ENCODE measurements at regions of chr17 and their contacts with region 1.

Region 1: DNA sequence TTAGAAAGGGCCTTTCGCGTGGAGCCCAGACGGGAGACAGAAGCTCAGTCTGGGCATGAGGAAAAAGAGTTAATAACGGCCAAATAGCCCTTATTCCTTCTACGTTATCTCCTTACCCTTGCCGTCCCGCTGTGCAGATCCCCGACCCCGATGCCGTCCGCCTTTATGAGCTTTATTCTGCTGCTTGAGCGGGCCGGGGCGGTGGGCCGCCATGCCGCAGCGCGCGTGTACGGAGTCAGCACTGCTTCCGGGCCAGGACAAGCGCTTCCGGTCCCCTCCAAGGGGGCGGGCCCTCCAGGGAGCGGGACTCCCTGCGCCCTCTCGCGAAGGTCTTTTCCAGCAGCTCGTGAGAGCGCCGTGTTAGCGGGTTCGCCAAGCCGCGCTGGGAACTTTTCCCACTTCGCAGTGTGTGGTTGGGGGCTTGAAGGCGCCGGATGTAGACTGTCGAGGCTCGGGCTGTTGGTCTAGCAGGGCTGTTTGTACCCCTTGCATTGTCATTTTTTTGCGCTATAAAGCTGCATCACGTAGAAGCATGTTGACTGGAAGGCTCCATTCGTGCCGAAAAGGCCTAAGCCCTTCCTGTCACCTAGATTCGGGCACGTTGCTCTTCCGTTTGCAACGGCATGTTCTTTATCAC is at the start of gene TSR1:
- DNase-seq: peak; percentile 84 to 93 (median 86)
- ATAC-seq: peak; percentile 78 to 83
- H3K4me3 Mint-ChIP-seq: peak within 1 kb of the TSS in 9 of 10 donors; percentile 97 to 100 (median 99)
- H3K27ac Mint-ChIP-seq: peak within 1 kb of the TSS; percentile 93 to 99 (median 97)
- H3K4me1 Mint-ChIP-seq: peaks cover 16 to 38% (median 22%) of the 10 kb centered on the region in 4 donors
- H3K27me3 Mint-ChIP-seq: no peaks in the 10 kb centered on the region
- polyA plus RNA-seq, gene TSR1: 12.0 to 22.1 (median 14.0) TPM

Region 2: GRCh38 chr17:2303204-2304188 is 32.8 kb before region 1 on chr17 and contains the starts of genes SMG6 and SRR:
- POLR2A ChIA-PET with region 1: interaction called, 34 read pairs
- DNase-seq: peak; percentile 85 to 97 (median 94)
- ATAC-seq: peak; percentile 87 to 90
- H3K4me3 Mint-ChIP-seq: peak within 1 kb of the TSS; percentile 83 to 95 (median 92)
- H3K27ac Mint-ChIP-seq: peak within 1 kb of the TSS; percentile 57 to 95 (median 92)
- H3K4me1 Mint-ChIP-seq: peaks cover 17 to 43% (median 33%) of the 10 kb centered on the region in 4 donors
- H3K27me3 Mint-ChIP-seq: no peaks in the 10 kb centered on the region
- polyA plus RNA-seq, gene SMG6: 5.3 to 13.5 (median 9.0) TPM
- polyA plus RNA-seq, gene SRR: 3.6 to 9.6 (median 8.4) TPM

Region 3: GRCh38 chr17:2348308-2348685 is 12.0 kb after region 1 on chr17:
- POLR2A ChIA-PET with region 1: interaction called, 31 read pairs
- DNase-seq: no peak
- ATAC-seq: no peak
- H3K4me3 Mint-ChIP-seq: no peak overlapping the region
- H3K27ac Mint-ChIP-seq: peak overlapping the region in 2 of 10 donors; percentile 29 to 60
- H3K4me1 Mint-ChIP-seq: peaks cover 6 to 22% (median 12%) of the 10 kb centered on the region in 4 donors
- H3K27me3 Mint-ChIP-seq: no peaks in the 10 kb centered on the region

Region 4: GRCh38 chr17:2401426-2402221 is 65.3 kb after region 1 on chr17:
- POLR2A ChIA-PET with region 1: interaction called, 38 read pairs
- DNase-seq: peak; percentile 98 to 100 (median 99)
- ATAC-seq: peak; percentile 57 to 65
- H3K4me3 Mint-ChIP-seq: peak overlapping the region; percentile 92 to 100 (median 94)
- H3K27ac Mint-ChIP-seq: peak overlapping the region; percentile 92 to 100 (median 100)
- H3K4me1 Mint-ChIP-seq: peaks cover 25 to 47% (median 35%) of the 10 kb centered on the region in 4 donors
- H3K27me3 Mint-ChIP-seq: no peaks in the 10 kb centered on the region